ENCODE measurements at regions of chr7 and their contacts with region 1.

Region 1: GRCh38 chr7:2116989-2117591 is 115.7 kb downstream of the MAD1L1 start:
- DNase-seq: peak; percentile 75 to 79
- ATAC-seq: peak; percentile 48 to 85 (median 80)
- H3K4me3 ChIP-seq: no peak overlapping the region
- H3K27ac ChIP-seq: peak overlapping the region; percentile 50 to 84 (median 72)
- H3K4me1 ChIP-seq: peaks cover 17 to 65% (median 44%) of the 10 kb centered on the region in 9 donors
- H3K27me3 ChIP-seq: no peaks in the 10 kb centered on the region
- CTCF ChIP-seq: peak in 4 of 9 donors; percentile 8 to 41 (median 28)

Region 2: DNA sequence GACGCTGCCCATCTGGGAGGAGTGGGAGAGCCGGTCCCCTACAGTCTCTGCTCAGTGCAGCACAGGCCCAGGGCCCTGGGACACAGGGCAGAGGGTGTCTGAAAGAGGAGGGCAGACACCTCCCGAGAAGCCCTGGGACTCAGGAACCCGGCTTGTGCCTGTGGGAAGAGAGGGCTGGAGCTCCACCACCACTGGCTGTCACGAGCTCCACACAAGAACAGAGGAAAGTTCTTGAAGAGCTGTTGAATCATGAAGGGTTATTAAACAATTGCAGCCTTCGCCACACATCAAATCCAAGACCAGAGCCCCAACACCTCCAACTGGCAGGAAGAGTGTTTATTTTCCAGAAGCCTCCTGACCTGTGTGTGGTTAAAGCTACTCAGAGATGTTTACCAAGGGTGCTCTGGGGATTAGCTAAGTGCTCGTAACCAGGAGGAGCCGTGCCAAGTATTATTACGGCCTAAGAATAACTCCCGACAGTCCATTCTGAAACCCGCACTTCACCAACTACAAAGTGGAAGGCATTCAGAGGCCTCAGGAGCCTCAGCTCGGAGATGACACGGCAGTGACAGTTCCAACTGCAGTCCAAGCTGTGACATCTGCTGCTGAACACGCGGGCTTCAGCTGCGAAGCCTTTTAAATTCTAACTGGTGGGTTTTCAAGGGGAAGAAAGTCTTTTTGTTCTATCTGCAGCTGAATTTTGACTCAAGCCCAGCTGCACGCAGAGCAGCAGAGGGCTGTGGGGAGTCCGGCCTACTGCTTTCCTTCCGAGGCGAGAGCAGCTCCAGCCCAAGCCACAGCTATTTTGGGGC is 40.6 kb after region 1 on chr7:
- intact Hi-C with region 1: loop called in 2 of 10 experiments (anchors 5 kb)
- DNase-seq: peak in 1 of 2 donors; percentile 68
- ATAC-seq: peak; percentile 79 to 94 (median 87)
- H3K4me3 ChIP-seq: no peak overlapping the region
- H3K27ac ChIP-seq: peak overlapping the region; percentile 17 to 90 (median 66)
- H3K4me1 ChIP-seq: peaks cover 8 to 30% (median 21%) of the 10 kb centered on the region in 9 donors
- H3K27me3 ChIP-seq: no peaks in the 10 kb centered on the region
- CTCF ChIP-seq: no peak